ENCODE measurements at regions of chr7 and their contacts with region 1.

Region 1: DNA sequence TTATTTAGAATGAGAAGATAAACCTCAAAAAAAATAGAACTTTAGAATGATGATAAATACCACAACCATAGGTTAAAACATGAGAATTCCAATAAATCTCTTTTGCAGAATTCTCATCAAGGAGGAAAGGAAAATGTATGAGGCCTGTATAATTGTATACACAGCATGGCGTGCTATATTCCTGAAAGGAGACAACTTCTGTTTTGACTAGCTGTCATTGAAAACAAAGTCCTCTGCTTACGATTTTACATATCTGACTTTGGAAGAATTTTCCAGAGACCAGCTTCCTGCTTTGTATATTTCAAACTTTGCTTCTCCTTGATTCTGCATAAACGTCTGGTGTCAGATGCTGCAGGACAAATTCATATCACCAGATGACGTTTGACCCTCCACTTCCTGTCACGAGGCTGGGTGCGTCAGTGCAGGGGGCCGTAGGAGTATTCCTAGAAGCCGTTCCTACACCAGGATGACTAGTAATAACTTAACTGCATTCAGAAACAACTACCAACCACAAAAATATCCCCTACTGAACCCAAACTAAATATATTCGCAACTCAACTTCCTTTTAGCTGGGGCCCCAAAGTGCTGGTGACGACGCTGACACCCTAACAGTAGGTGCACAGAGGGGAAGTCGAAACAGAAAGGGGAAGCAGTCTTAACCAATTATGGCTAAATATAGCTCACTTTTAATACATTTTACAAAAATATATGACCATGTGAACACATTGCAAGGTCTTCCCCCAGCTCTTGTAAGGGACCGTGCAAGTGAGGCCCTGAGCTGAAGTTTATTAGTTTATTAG is 178.6 kb upstream of the INHBA start:
- DNase-seq: peak; percentile 97 to 99 (median 97)
- H3K4me3 ChIP-seq: peak overlapping the region in 1 of 3 experiments; percentile 44
- H3K4me3 Mint-ChIP-seq: peak overlapping the region; percentile 50 to 83
- H3K27ac ChIP-seq: peak overlapping the region; percentile 49 to 85
- H3K27ac Mint-ChIP-seq: peak overlapping the region; percentile 95 to 98 (median 97)
- H3K4me1 ChIP-seq: peaks cover 47 to 53% of the 10 kb centered on the region in 2 donors
- H3K4me1 Mint-ChIP-seq: peaks cover 52% of the 10 kb centered on the region
- H3K27me3 ChIP-seq: no peaks in the 10 kb centered on the region
- H3K27me3 Mint-ChIP-seq: peaks cover 0 to 8% (median 4%) of the 10 kb centered on the region in 3 donors
- CTCF ChIP-seq: no peak

Region 2: GRCh38 chr7:40263752-40264390 is 1617.7 kb before region 1 on chr7:
- intact Hi-C with region 1: loop called in 1 of 2 experiments (anchors 10 kb)
- DNase-seq: no peak
- H3K4me3 ChIP-seq: no peak overlapping the region
- H3K4me3 Mint-ChIP-seq: no peak overlapping the region
- H3K27ac ChIP-seq: no peak overlapping the region
- H3K27ac Mint-ChIP-seq: peak overlapping the region in 1 of 7 donors; percentile 1
- H3K4me1 ChIP-seq: peaks cover 8% of the 10 kb centered on the region in 2 donors
- H3K4me1 Mint-ChIP-seq: peaks cover 11% of the 10 kb centered on the region
- H3K27me3 ChIP-seq: no peaks in the 10 kb centered on the region
- H3K27me3 Mint-ChIP-seq: peaks cover 0 to 8% (median 2%) of the 10 kb centered on the region in 3 donors
- CTCF ChIP-seq: no peak

Region 3: DNA sequence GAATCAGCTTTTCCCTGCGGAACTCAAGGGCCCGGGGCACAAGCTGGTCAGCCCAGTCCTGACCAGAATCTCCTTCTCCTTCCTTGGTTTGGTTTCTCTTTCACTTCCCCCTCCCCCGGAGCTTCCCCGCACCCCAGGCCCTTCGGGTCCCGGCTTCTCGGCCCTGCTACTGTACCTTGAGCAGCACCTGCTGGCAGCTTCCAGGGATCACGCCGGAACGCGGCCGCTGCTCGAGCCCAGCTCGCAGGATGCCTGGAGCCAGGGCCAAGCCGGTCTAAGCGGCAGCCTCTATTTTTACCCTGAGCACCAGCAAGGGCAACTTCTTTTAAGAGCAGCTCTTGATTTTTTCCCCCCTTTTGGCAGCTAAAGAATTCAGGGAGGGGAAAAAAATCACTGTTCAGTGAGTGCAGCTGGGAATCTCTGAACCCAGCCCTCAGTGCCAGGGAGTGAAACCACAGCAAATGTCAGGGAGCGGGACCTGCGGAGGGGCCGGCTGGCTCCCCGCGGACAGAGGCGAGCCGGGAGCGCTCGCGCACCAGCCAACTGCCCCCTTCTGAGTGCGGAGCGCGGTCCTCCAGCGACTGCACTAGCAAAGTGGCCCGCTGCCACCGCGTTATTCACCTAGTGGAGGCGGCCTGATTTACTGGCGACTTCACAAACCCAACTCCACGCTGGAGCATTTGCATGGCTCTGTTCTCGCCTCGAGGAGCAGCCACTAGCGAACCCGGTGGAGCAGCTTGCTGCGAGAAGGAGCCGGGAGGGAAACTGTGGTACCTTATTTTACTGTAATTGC is 176.2 kb before region 1 on chr7:
- intact Hi-C with region 1: loop called (anchors 5 to 10 kb)
- DNase-seq: peak; percentile 83 to 90 (median 84)
- H3K4me3 ChIP-seq: peak overlapping the region; percentile 45 to 84 (median 58)
- H3K4me3 Mint-ChIP-seq: peak overlapping the region; percentile 87 to 93
- H3K27ac ChIP-seq: peak overlapping the region; percentile 39 to 75
- H3K27ac Mint-ChIP-seq: peak overlapping the region; percentile 76 to 92 (median 88)
- H3K4me1 ChIP-seq: peaks cover 16 to 33% of the 10 kb centered on the region in 2 donors
- H3K4me1 Mint-ChIP-seq: peaks cover 46% of the 10 kb centered on the region
- H3K27me3 ChIP-seq: peaks cover 0 to 3% of the 10 kb centered on the region in 2 donors
- H3K27me3 Mint-ChIP-seq: peaks cover 6 to 23% (median 15%) of the 10 kb centered on the region in 3 donors
- CTCF ChIP-seq: peak; percentile 85

Region 4: GRCh38 chr7:41779918-41780317 is 101.6 kb before region 1 on chr7:
- intact Hi-C with region 1: loop called (anchors 5 kb)
- DNase-seq: peak; percentile 68 to 88 (median 80)
- H3K4me3 ChIP-seq: peak overlapping the region in 1 of 3 experiments; percentile 35
- H3K4me3 Mint-ChIP-seq: peak overlapping the region in 1 of 2 donors; percentile 51
- H3K27ac ChIP-seq: peak overlapping the region; percentile 76 to 88
- H3K27ac Mint-ChIP-seq: peak overlapping the region; percentile 92 to 98 (median 95)
- H3K4me1 ChIP-seq: peaks cover 42 to 45% of the 10 kb centered on the region in 2 donors
- H3K4me1 Mint-ChIP-seq: peaks cover 45% of the 10 kb centered on the region
- H3K27me3 ChIP-seq: no peaks in the 10 kb centered on the region
- H3K27me3 Mint-ChIP-seq: peaks cover 0 to 3% (median 0%) of the 10 kb centered on the region in 3 donors
- CTCF ChIP-seq: no peak

Region 5: DNA sequence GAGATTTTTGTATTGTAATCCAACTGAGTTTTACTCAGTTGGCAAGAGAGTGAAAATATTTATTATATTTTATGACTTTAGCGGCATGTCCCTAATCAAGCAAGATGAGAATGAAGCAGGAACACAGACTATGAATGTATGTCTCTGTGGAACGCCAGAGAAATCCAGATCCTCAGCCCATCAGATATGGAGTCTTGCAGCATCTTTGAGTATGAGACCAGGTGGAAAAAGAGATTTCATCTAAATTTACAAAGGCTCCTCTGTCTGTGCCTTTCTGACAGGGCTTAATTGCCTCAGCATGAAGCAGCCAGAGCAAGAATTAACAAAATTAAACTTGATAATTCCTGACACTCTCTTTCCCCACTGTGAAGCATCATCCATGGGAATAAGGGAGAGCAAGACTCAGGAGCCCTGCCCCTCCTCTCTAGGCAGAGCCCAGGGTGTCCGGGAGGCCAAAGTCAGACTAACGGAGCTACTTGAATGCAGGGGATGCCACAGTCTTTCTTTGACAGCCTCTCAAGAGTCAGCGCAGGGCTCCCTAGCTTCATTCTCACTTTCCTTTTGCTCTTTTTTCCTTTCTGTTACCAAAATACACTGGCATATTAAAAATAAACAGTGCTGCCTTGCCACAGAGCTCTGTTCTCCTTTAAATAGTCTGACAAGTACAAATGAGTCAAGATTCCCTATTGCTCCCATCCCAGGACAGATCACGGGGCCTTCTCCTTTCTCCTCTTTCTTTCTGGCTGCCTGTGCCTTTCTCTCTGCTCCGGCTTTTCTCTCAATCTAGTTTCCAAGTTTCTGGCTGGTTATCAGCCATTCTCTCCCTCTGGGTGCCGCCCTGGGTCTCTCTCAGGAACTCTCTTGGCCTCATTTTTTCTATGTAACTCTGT is 46.5 kb before region 1 on chr7:
- intact Hi-C with region 1: loop called in 1 of 2 experiments (anchors 10 kb)
- DNase-seq: no peak
- H3K4me3 ChIP-seq: no peak overlapping the region
- H3K4me3 Mint-ChIP-seq: no peak overlapping the region
- H3K27ac ChIP-seq: no peak overlapping the region
- H3K27ac Mint-ChIP-seq: peak overlapping the region in 3 of 7 donors; percentile 13 to 46 (median 16)
- H3K4me1 ChIP-seq: peaks cover 0 to 9% of the 10 kb centered on the region in 2 donors
- H3K4me1 Mint-ChIP-seq: peaks cover 10% of the 10 kb centered on the region
- H3K27me3 ChIP-seq: no peaks in the 10 kb centered on the region
- H3K27me3 Mint-ChIP-seq: peaks cover 0 to 4% (median 2%) of the 10 kb centered on the region in 3 donors
- CTCF ChIP-seq: no peak

Region 6: GRCh38 chr7:42046483-42046882 is 165.0 kb after region 1 on chr7:
- intact Hi-C with region 1: no loop called
- DNase-seq: no peak
- H3K4me3 ChIP-seq: no peak overlapping the region
- H3K4me3 Mint-ChIP-seq: no peak overlapping the region
- H3K27ac ChIP-seq: no peak overlapping the region
- H3K27ac Mint-ChIP-seq: no peak overlapping the region
- H3K4me1 ChIP-seq: no peaks in the 10 kb centered on the region
- H3K4me1 Mint-ChIP-seq: no peaks in the 10 kb centered on the region
- H3K27me3 ChIP-seq: no peaks in the 10 kb centered on the region
- H3K27me3 Mint-ChIP-seq: peaks cover 0 to 4% (median 1%) of the 10 kb centered on the region in 3 donors
- CTCF ChIP-seq: no peak

Measured in CD14-positive monocyte (primary cell).